Heart left ventricle (tissue), 16 donors: ENCODE measurements at regions of chr2 and their contacts with region 1.

Region 1: GRCh38 chr2:190804182-190804795 is 76.3 kb upstream of the GLS start:
- DNase-seq: no peak
- ATAC-seq: no peak
- H3K4me3 ChIP-seq: no peak overlapping the region
- H3K27ac ChIP-seq: no peak overlapping the region
- H3K4me1 ChIP-seq: peaks cover 0 to 4% (median 0%) of the 10 kb centered on the region in 12 donors
- H3K27me3 ChIP-seq: no peaks in the 10 kb centered on the region
- CTCF ChIP-seq: peak; percentile 46 to 79 (median 70)
- POLR2A ChIP-seq: no peak

Region 2: DNA sequence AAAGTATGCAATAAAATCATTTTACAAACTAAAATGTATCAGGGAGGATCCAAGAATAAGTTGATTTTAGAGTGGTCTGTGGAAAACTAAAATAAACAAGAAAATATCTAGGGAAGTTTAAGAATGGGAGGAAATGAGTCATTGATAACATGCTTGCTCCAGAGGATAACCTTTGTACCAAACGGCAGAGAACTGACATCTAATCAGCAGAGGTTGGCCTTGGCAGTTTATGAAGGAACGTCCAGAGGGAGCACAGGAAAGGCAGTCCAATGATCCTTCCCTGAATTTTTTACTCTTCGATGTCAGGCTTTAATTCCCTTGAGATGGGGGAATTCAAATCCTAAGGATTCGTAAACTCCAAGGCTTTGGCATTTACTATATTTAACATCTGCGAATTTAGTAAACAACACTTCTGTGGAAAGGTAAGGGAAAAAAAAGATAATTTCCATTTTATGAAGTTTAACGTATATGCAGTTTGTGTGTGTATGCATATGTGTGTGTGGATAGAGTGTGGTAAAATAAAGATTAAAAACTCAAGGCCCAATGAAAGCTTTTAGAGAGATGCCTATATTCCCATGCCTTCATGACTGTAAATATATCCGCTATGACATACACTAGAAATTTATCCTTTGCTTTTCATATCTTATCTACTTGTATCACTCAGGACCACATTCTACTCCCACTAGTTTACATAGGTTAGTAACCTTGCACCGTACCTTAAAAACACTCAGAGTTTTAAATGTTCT is 469.6 kb before region 1 on chr2:
- intact Hi-C with region 1: loop called in 1 of 10 experiments (anchors 10 kb)
- DNase-seq: no peak
- ATAC-seq: peak; percentile 67 to 97 (median 82)
- H3K4me3 ChIP-seq: no peak overlapping the region
- H3K27ac ChIP-seq: peak overlapping the region in 10 of 12 donors; percentile 11 to 68 (median 42)
- H3K4me1 ChIP-seq: peaks cover 0 to 11% (median 4%) of the 10 kb centered on the region in 12 donors
- H3K27me3 ChIP-seq: no peaks in the 10 kb centered on the region
- CTCF ChIP-seq: no peak
- POLR2A ChIP-seq: no peak

Region 3: GRCh38 chr2:190382851-190383250 is 421.4 kb before region 1 on chr2:
- intact Hi-C with region 1: loop called in 5 of 10 experiments (anchors 10 kb)
- DNase-seq: no peak
- ATAC-seq: peak; percentile 51 to 71 (median 62)
- H3K4me3 ChIP-seq: no peak overlapping the region
- H3K27ac ChIP-seq: no peak overlapping the region
- H3K4me1 ChIP-seq: no peaks in the 10 kb centered on the region
- H3K27me3 ChIP-seq: no peaks in the 10 kb centered on the region
- CTCF ChIP-seq: peak; percentile 33 to 71 (median 59)
- POLR2A ChIP-seq: no peak

Region 4: DNA sequence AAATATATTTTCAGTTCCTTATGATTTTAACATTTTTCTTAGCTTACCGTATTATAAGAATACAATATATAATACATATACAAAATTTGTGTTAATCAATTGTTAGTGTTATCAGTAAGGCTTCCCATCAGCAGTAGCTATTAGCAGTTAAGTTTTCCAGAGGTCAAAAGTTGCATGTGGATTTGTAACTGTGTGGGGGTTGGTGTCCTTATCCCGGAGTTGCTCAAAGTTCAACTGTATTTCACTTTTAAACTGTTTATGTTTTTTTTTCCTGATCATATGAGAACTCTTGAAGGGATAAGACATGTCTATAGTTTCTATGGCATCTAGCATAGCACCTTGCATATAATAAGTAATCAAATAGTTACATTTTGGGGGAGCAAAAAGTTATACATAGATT is 408.0 kb before region 1 on chr2:
- intact Hi-C with region 1: loop called in 1 of 10 experiments (anchors 5 kb)
- DNase-seq: no peak
- ATAC-seq: no peak
- H3K4me3 ChIP-seq: no peak overlapping the region
- H3K27ac ChIP-seq: no peak overlapping the region
- H3K4me1 ChIP-seq: no peaks in the 10 kb centered on the region
- H3K27me3 ChIP-seq: no peaks in the 10 kb centered on the region
- CTCF ChIP-seq: no peak
- POLR2A ChIP-seq: no peak

Region 5: DNA sequence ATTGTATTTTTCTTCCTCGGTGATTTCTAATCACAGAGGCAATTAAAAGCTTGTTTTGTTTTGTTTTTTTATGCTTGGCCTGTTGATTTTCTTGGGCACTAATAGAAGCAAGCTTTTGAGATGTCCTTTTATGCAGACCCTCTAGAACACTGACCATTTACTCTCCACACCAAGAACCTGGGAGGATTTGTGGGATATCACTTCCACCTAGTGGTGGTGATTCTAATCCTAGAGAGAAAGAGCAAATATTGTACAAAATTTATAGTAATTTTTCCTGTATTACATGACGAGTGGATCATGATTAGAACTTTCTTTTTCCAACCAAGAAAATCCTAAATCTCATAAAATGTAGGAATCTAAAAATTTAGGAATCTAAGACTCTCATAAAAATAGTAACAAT is 293.2 kb before region 1 on chr2:
- intact Hi-C with region 1: loop called in 1 of 10 experiments (anchors 10 kb)
- DNase-seq: no peak
- ATAC-seq: no peak
- H3K4me3 ChIP-seq: no peak overlapping the region
- H3K27ac ChIP-seq: no peak overlapping the region
- H3K4me1 ChIP-seq: peaks cover 0 to 10% (median 0%) of the 10 kb centered on the region in 12 donors
- H3K27me3 ChIP-seq: no peaks in the 10 kb centered on the region
- CTCF ChIP-seq: peak; percentile 16 to 72 (median 58)
- POLR2A ChIP-seq: no peak

Region 6: GRCh38 chr2:190528521-190529001 is 275.7 kb before region 1 on chr2:
- intact Hi-C with region 1: loop called in 2 of 10 experiments (anchors 10 kb)
- DNase-seq: no peak
- ATAC-seq: no peak
- H3K4me3 ChIP-seq: no peak overlapping the region
- H3K27ac ChIP-seq: no peak overlapping the region
- H3K4me1 ChIP-seq: peaks cover 0 to 60% (median 10%) of the 10 kb centered on the region in 12 donors
- H3K27me3 ChIP-seq: no peaks in the 10 kb centered on the region
- CTCF ChIP-seq: no peak
- POLR2A ChIP-seq: no peak

Region 7: DNA sequence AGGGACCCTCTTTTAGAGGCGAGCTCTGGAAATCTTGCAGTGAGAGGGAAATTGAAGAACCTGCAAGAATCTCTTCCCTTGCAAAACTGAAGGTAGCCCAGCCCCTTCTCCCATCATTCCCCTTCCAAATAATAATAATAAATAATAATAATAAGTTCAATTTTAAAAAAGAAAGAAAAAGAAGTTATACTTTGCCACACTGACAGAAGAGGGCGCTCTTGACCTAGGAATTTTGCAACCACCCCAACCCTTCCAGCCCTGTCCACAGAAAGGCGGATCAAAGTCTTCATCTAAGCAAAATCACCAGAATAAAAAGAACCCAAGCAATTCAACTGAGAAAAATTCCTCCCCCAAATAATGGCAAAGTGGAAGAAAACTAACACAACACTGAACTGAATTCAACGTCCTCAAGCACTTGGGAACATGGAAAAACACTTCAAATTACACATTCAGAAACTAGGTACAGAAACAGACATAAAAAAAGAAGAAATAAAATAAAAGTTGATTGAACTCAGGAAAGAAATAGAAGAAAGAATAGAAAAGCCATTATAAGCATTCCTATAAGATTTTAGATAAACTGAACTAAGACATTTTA is 22.6 kb before region 1 on chr2:
- intact Hi-C with region 1: loop called in 2 of 10 experiments (anchors 1 to 2 kb)
- DNase-seq: peak in 3 of 5 donors; percentile 42 to 46 (median 42)
- ATAC-seq: peak in 3 of 4 donors; percentile 52 to 69 (median 69)
- H3K4me3 ChIP-seq: no peak overlapping the region
- H3K27ac ChIP-seq: no peak overlapping the region
- H3K4me1 ChIP-seq: peaks cover 0 to 3% (median 0%) of the 10 kb centered on the region in 12 donors
- H3K27me3 ChIP-seq: no peaks in the 10 kb centered on the region
- CTCF ChIP-seq: peak; percentile 41 to 78 (median 66)
- POLR2A ChIP-seq: no peak